Activated CD4-positive, alpha-beta memory T cell treated with anti-CD3 and anti-CD28 coated beads, Interleukin-2, amount 10 ng/mL, durations not matched to agents 7 days and 5 days (primary cell): ENCODE measurements at regions of chr10 and their contacts with region 1.

Region 1: GRCh38 chr10:70602665-70603448 is at the start of gene PRF1:
- DNase-seq: peak; percentile 89
- H3K4me3 Mint-ChIP-seq: peak within 1 kb of the TSS; percentile 90
- H3K27ac Mint-ChIP-seq: peak within 1 kb of the TSS; percentile 89
- H3K4me1 Mint-ChIP-seq: peaks cover 35% of the 10 kb centered on the region
- H3K27me3 Mint-ChIP-seq: no peaks in the 10 kb centered on the region
- total RNA-seq, gene PRF1: 136 to 141 TPM

Region 2: DNA sequence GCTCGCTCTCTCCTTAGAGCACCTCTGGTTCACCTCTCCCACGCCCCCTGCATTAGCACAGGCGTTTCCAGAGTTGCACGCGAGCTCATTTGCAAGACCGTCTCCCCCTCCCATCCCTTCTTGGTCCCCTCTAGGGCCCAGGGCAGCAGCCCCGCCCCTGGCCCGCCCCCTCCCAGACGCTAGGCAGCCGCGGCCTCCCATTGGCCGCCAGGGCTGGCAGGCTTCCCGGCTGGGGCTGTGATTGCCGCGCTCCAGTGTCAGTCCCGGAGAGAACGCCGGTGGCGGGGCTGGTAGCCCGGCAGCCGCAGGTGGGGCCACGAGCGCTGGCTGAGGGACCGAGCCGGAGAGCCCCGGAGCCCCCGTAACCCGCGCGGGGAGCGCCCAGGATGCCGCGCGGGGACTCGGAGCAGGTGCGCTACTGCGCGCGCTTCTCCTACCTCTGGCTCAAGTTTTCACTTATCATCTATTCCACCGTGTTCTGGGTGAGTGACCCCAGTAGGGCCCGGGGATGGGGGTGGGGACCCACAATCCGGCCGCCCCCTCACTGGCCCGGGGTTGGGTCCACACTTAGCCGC is 1151.6 kb before region 1 on chr10 and contains the start of gene TSPAN15:
- CTCF ChIA-PET with region 1: no interaction called
- POLR2A ChIA-PET with region 1: no interaction called
- DNase-seq: peak; percentile 84
- H3K4me3 Mint-ChIP-seq: peak within 1 kb of the TSS; percentile 85
- H3K27ac Mint-ChIP-seq: peak within 1 kb of the TSS; percentile 28
- H3K4me1 Mint-ChIP-seq: peaks cover 56% of the 10 kb centered on the region
- H3K27me3 Mint-ChIP-seq: peaks cover 10% of the 10 kb centered on the region
- total RNA-seq, gene TSPAN15: 9.0 to 9.1 TPM

Region 3: DNA sequence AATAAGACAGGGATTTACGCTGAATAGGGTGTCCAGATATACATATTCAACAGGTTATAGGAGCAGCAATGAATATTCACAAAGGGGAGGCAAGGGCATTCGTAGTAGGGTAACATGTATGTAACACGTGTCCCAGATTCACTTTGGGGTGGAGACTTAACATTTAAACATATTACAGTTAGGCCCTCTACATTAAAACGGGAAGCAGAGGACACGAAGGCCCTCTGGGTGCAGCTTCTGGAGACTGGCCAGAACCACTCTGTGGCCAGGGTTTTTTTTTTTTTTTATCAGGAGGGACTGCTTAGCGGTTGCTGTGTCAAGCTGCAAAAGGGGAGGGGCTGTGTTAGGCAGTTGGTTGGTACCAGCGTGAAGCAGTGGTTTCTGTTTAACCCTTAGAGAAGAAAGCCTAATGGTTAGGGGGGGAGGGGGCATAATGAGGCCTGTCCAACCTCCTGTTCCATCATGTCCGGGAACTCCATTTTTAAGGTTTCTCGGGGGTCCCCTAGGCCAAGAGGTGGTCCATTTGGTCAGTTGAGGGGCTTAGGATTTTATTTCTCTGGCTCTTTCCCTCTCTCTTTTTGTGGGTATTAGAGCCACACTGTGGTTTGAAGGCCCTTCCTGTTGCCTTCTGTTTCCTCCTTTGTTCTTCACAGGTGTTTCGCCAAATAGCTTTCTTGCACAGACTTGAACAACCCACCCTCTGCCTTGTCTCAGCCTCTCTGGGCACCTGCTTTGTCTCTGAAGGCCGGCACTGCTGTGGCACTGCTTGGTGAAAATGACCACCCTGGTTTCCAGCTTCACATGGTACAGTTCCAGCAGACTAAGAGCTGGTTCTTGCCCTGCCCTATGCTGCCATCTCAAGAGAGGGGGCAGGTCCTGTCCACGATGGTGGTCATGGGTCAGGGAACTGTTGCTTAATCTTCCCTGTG is 26.7 kb before region 1 on chr10:
- CTCF ChIA-PET with region 1: interaction called, 5 read pairs
- POLR2A ChIA-PET with region 1: interaction called, 12 read pairs
- DNase-seq: peak; percentile 55
- H3K4me3 Mint-ChIP-seq: peak overlapping the region; percentile 17
- H3K27ac Mint-ChIP-seq: peak overlapping the region; percentile 75
- H3K4me1 Mint-ChIP-seq: peaks cover 49% of the 10 kb centered on the region
- H3K27me3 Mint-ChIP-seq: peaks cover 6% of the 10 kb centered on the region

Region 4: GRCh38 chr10:70626056-70626455 is 23.2 kb after region 1 on chr10:
- CTCF ChIA-PET with region 1: no interaction called
- POLR2A ChIA-PET with region 1: no interaction called
- DNase-seq: no peak
- H3K4me3 Mint-ChIP-seq: no peak overlapping the region
- H3K27ac Mint-ChIP-seq: no peak overlapping the region
- H3K4me1 Mint-ChIP-seq: no peaks in the 10 kb centered on the region
- H3K27me3 Mint-ChIP-seq: peaks cover 11% of the 10 kb centered on the region

Region 5: DNA sequence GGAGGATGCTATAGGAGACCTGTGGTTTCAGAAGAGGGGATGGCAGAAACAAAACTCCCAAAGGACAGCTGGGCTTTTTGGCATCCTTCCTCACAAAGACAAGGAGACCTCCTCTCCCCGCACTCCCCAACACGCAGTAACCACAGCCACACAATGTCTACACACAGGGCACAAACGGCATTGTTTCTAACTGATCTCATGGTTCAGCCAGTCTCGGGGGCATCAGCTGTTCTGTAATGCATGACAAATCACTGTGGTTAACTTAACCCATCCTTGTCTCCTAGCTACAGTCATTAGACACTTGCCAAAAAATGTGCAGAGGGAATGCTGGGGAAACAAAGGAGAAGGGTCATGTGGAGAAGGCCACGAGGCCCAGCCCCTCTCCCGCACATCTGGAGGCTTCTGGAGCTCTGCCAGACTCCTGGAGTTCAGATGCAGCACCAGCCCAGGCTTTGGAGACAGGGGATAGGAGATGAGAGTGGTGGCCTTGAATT is 61.9 kb after region 1 on chr10:
- CTCF ChIA-PET with region 1: no interaction called
- POLR2A ChIA-PET with region 1: no interaction called
- DNase-seq: no peak
- H3K4me3 Mint-ChIP-seq: no peak overlapping the region
- H3K27ac Mint-ChIP-seq: no peak overlapping the region
- H3K4me1 Mint-ChIP-seq: peaks cover 7% of the 10 kb centered on the region
- H3K27me3 Mint-ChIP-seq: peaks cover 15% of the 10 kb centered on the region